PC-3 (cell line): ENCODE measurements at regions of chr1 and their contacts with region 1.

Region 1: DNA sequence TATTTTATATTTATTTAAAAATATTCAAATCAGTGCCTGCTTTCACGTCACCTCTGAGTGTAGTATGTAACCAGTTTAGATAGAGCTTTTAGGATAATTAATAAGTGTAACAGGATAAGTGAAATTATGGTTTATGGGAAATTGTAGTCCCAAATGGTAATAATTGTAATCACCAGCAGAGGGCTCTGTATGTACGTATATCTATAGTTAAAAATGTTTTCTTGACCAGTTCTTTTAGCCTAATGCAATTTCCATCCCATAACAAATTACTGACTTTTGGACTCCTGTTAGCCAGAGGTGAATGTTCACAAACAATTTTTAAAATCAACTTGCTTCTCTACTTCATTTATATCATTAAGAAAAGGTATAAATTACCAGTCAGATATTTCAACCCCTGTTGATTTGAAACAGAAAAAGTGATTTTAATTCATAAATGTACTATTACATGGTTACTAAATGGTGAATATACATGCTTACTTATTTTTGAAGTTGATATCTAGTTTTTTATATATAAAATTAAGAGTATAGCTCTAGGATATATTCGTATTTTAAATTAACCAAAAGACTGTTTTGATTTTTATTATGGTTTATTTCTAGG is 25.3 kb downstream of the SLC30A7 start:
- DNase-seq: peak; percentile 79
- ATAC-seq: no peak
- H3K4me3 ChIP-seq: no peak overlapping the region
- H3K27ac ChIP-seq: no peak overlapping the region
- H3K4me1 ChIP-seq: peaks cover 7% of the 10 kb centered on the region; the same call in 1 of the 2 replicates
- H3K27me3 ChIP-seq: no peaks in the 10 kb centered on the region
- CTCF ChIP-seq: peak; percentile 67

Region 2: DNA sequence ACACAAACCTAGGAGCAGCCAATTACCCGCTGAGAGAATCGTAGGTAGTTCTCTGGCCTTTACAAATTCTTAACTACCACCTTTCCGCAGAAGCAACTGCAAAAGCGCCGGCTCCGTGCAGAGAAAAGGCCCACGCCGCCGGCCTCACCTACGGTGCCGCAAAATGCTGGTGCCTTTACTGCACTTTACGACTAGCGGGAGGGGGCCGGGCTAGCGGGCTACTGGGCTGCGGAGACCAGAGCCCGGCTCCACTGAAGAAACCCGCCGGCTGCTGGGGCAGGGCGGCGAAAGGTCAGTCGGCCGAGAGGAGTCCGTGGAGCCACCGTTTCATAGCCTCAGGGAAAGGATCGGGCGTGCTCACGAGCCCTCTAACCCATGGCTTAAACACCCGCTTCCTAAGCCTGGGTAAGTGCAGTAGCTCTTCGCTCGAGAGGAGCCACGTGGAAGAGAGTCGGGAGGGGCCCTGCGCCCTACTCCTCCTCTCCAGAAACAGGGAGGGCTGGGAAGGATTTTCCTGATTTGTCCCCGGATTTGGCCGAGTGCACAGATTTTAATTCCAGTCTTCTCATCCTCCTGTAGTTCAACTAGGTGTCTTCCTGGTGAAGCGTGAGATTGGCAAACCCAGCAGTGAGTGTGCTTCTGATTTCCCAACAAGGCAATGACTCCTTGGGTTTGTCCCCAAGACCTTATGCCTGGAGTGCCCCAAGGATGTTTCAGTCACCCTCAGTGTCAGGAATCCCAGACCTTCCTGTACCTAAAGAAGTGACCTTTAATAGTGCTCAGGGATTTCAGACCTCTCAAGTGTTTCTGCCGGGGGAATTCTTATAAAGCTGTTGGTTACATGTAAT is 104.7 kb after region 1 on chr1 and contains the start of gene DPH5:
- CTCF ChIA-PET with region 1: no interaction called
- POLR2A ChIA-PET with region 1: no interaction called
- intact Hi-C with region 1: loop called (anchors 5 kb)
- DNase-seq: peak; percentile 90
- ATAC-seq: peak; percentile 89
- H3K4me3 ChIP-seq: peak within 1 kb of the TSS; percentile 80
- H3K27ac ChIP-seq: peak within 1 kb of the TSS; percentile 65
- H3K4me1 ChIP-seq: peaks cover 30% of the 10 kb centered on the region
- H3K27me3 ChIP-seq: no peaks in the 10 kb centered on the region
- CTCF ChIP-seq: no peak
- total RNA-seq, gene DPH5: 24.9 and 32.8 TPM in 2 replicates